A549 (cell line): ENCODE measurements at regions of chr2 and their contacts with region 1.

Region 1: DNA sequence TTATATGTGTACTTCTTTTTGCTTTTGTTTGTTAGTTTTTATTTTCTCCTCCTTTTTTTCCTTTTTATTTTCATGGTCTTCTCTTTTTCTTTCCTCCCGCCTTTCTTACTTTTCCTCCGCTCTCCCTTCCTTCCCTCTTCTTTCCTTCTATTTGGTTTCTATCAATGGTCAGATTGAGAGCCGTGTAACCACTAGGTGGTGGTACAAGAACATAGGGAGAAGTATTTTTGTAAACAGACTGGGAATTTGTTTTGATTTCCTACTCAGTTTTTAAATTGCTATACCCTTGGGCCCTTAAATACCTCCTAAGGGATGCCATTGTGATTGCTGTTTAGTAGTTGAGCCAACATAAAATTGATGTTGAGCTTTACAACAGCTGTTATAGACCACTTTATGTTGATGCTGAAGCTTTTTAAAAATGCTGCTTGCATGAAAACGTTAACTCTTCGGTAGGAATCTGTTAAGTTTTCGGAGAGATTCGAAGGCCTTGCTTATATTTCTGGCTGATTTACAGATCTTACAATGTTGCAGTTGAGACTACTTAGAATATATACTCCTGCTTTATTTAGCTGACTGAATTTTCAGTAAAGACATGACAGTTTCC is 124.2 kb downstream of the UBE2E3 start:
- DNase-seq: peak; percentile 9 to 58
- ATAC-seq: peak; percentile 36 to 74; a peak in 5 of 6 replicates
- H3K4me3 ChIP-seq: no peak overlapping the region
- H3K27ac ChIP-seq: no peak overlapping the region
- H3K4me1 ChIP-seq: peaks cover 25% of the 10 kb centered on the region
- CTCF ChIP-seq: peak; percentile 84
- EP300 ChIP-seq: no peak
- POLR2A ChIP-seq: no peak
- RAD21 ChIP-seq: peak; percentile 85 to 87

Region 2: GRCh38 chr2:181457121-181457740 is 352.6 kb after region 1 on chr2 and contains the start of gene ITGA4:
- CTCF ChIA-PET with region 1: interaction called, 31 read pairs
- POLR2A ChIA-PET with region 1: no interaction called
- DNase-seq: peak; percentile 36 to 52
- ATAC-seq: peak; percentile 98 to 100
- H3K4me3 ChIP-seq: peak within 1 kb of the TSS; percentile 57
- H3K27ac ChIP-seq: peak within 1 kb of the TSS; percentile 54 to 81; a peak in 5 of 6 replicates
- H3K4me1 ChIP-seq: no peaks in the 10 kb centered on the region
- CTCF ChIP-seq: peak; percentile 64
- EP300 ChIP-seq: no peak
- POLR2A ChIP-seq: no peak
- RAD21 ChIP-seq: peak; percentile 58 to 78
- polyA plus RNA-seq, gene ITGA4: 1.4 and 1.7 TPM in 2 replicates

Region 3: GRCh38 chr2:181466661-181467576 is 362.3 kb after region 1 on chr2:
- CTCF ChIA-PET with region 1: interaction called, 28 read pairs
- POLR2A ChIA-PET with region 1: no interaction called
- DNase-seq: peak in 1 of 2 experiments; percentile 51
- ATAC-seq: peak in 1 of 2 experiments; percentile 62; a peak in 2 of 6 replicates
- H3K4me3 ChIP-seq: no peak overlapping the region
- H3K27ac ChIP-seq: no peak overlapping the region
- H3K4me1 ChIP-seq: no peaks in the 10 kb centered on the region
- CTCF ChIP-seq: peak; percentile 79
- EP300 ChIP-seq: no peak
- POLR2A ChIP-seq: no peak
- RAD21 ChIP-seq: peak; percentile 52 to 58; a peak in 4 of 5 replicates

Region 4: GRCh38 chr2:181715033-181715630 is 610.5 kb after region 1 on chr2:
- CTCF ChIA-PET with region 1: interaction called, 12 read pairs
- POLR2A ChIA-PET with region 1: no interaction called
- DNase-seq: peak; percentile 16 to 78
- ATAC-seq: peak; percentile 76 to 90; a peak in 5 of 6 replicates
- H3K4me3 ChIP-seq: no peak overlapping the region
- H3K27ac ChIP-seq: no peak overlapping the region
- H3K4me1 ChIP-seq: no peaks in the 10 kb centered on the region
- CTCF ChIP-seq: peak; percentile 87
- EP300 ChIP-seq: no peak
- POLR2A ChIP-seq: no peak
- RAD21 ChIP-seq: peak; percentile 90 to 94